CD4-positive, alpha-beta T cell (primary cell): ENCODE measurements at regions of chr7 and their contacts with region 1.

Region 1: DNA sequence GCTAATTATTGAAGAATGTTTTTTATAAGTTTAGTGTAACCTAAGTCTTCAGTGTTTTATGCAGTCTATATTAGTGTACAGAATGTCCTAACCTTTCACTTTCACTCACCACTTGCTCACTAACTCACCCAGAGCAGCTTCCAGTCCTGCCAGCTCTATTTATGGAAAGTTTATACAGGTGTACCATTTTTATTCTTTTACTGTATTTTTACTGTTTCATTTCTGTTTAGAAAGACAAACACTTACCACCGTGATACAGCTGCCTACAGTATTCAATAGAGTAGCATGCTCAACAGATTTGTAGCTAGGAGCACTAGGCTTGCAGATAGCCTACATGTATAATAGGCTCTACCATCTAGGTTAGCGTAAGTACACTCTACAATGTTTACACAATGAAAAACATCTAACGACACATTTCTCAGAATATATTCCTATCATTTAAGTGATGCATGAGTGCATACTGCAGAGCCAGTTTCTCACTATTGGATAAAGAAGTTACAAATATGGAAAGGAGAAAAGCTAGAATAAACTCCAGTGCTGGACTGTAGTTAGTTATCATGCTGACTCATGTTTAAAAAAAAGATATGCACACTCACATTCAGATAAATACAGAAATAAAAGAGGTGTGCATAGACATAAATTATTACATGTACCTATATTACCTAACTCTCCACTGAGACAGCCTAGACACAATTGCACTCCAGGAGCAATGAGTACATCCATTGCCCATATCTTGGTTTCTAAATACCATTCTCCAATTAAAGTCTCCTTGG is 30.4 kb downstream of the STEAP1B start:
- DNase-seq: no peak
- ATAC-seq: no peak
- H3K4me3 ChIP-seq: no peak overlapping the region
- H3K4me3 Mint-ChIP-seq: no peak overlapping the region
- H3K27ac ChIP-seq: no peak overlapping the region
- H3K27ac Mint-ChIP-seq: no peak overlapping the region
- H3K4me1 ChIP-seq: no peaks in the 10 kb centered on the region
- H3K4me1 Mint-ChIP-seq: no peaks in the 10 kb centered on the region
- H3K27me3 ChIP-seq: no peaks in the 10 kb centered on the region
- H3K27me3 Mint-ChIP-seq: no peaks in the 10 kb centered on the region
- CTCF ChIP-seq: no peak

Region 2: GRCh38 chr7:22055226-22055625 is 414.3 kb before region 1 on chr7:
- CTCF ChIA-PET with region 1: no interaction called
- POLR2A ChIA-PET with region 1: no interaction called
- intact Hi-C with region 1: loop called in 1 of 2 experiments (anchors 5 kb)
- DNase-seq: no peak
- ATAC-seq: no peak
- H3K4me3 ChIP-seq: no peak overlapping the region
- H3K4me3 Mint-ChIP-seq: no peak overlapping the region
- H3K27ac ChIP-seq: no peak overlapping the region
- H3K27ac Mint-ChIP-seq: no peak overlapping the region
- H3K4me1 ChIP-seq: no peaks in the 10 kb centered on the region
- H3K4me1 Mint-ChIP-seq: no peaks in the 10 kb centered on the region
- H3K27me3 ChIP-seq: peaks cover 0 to 2% of the 10 kb centered on the region in 2 experiments
- H3K27me3 Mint-ChIP-seq: peaks cover 30% of the 10 kb centered on the region
- CTCF ChIP-seq: no peak

Region 3: DNA sequence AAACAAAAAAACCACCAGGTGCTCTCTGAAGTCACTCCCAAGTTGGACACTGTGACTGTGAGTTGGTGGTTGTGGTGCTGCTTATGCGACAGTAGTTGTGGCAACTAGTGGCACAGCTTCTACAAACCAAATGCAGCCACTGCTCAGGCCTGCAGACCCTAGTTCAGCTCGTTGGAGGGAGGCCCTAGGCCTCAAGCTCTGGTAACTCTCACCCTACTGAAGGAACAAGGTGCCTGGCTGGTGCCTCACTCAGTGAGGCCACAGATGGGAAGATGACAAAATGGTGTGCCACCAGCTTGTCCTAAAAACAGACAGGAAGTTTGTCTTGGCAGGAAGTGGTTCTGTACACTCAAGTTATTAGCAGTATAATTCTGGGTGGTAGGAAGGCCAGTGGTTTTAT is 67.3 kb before region 1 on chr7:
- CTCF ChIA-PET with region 1: no interaction called
- POLR2A ChIA-PET with region 1: no interaction called
- intact Hi-C with region 1: no loop called
- DNase-seq: peak in 2 of 14 experiments; percentile 3 to 51
- ATAC-seq: no peak
- H3K4me3 ChIP-seq: no peak overlapping the region
- H3K4me3 Mint-ChIP-seq: no peak overlapping the region
- H3K27ac ChIP-seq: no peak overlapping the region
- H3K27ac Mint-ChIP-seq: no peak overlapping the region
- H3K4me1 ChIP-seq: peaks cover 11% of the 10 kb centered on the region
- H3K4me1 Mint-ChIP-seq: peaks cover 13% of the 10 kb centered on the region
- H3K27me3 ChIP-seq: no peaks in the 10 kb centered on the region
- H3K27me3 Mint-ChIP-seq: no peaks in the 10 kb centered on the region
- CTCF ChIP-seq: no peak